ENCODE measurements at regions of chr12 and their contacts with region 1.

Region 1: DNA sequence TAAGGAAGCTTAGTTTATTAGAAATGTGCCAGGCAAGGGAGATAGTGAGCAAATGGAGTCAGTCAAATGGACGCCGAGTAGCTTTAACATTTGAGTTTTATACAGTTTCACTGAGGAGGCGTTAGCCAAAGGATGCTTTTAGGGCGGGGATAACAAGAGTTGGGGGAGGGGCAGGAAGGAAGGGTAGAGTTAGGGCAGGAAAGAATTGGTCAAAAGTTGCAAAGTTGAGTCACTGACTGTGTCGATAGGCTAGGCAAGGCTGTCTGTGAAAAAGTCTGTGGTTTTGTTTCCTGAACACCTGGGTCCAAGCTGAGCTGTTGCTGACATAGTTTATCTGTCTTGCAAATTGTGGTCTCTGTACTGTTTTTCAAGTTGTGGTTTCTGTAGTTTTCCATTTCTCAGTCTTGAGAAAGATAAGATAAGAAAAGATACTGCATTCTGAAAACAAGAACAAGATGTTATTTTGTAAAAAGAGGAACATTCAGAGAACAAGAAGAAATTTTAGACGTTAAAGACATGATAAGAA is 62.6 kb upstream of the RESF1 start:
- DNase-seq: peak; percentile 96
- H3K4me3 Mint-ChIP-seq: peak overlapping the region; percentile 69
- H3K27ac Mint-ChIP-seq: peak overlapping the region; percentile 96
- H3K4me1 Mint-ChIP-seq: peaks cover 37% of the 10 kb centered on the region
- H3K27me3 Mint-ChIP-seq: no peaks in the 10 kb centered on the region

Region 2: DNA sequence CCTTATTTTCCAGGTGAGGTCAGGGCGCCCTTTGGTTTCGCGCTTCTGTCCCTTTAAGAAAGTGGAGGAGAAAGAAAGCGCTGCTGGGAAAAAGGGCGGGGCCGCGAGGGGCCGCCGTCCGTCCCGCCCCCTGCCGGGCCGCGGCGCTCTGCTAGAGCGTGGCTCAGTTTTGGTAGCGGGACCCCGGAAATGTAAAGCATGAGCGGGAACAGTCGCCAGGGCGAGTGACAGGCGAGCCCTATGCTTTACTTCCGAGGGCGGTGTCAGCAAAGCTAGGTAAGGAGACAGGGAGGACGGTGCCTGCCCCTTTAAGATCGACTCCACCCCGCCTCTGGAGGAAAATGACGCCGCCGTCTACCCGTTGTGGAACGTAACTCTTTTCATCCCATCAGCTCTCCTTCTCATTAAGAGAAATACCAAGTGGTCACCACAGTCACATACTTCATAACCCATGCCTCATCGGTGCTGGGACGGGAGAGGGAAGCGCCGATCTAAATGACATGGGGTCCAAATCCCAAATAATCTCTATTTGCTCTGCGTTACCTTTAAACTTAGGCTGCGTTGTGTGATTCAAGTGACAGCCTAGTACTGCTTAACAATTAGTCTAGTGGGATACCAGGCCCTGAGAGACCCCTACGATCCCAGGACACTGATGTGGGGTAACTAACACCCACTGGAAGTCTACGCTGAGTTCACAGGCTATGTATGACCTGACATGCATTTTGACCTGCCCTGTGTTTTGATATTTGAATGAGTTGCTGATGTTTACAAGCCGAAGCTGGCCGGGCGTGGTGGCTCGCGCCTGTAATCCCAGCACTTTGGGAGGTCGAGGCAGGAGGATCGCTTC is 237.3 kb before region 1 on chr12 and contains the start of gene ETFBKMT:
- intact Hi-C with region 1: loop called (anchors 10 kb)
- DNase-seq: peak; percentile 98
- H3K4me3 Mint-ChIP-seq: peak within 1 kb of the TSS; percentile 93
- H3K27ac Mint-ChIP-seq: peak within 1 kb of the TSS; percentile 99
- H3K4me1 Mint-ChIP-seq: peaks cover 15% of the 10 kb centered on the region
- H3K27me3 Mint-ChIP-seq: no peaks in the 10 kb centered on the region
- total RNA-seq, gene ETFBKMT: 0.52 and 0.84 TPM in 2 replicates

Region 3: GRCh38 chr12:31728917-31729640 is 167.5 kb before region 1 on chr12 and contains the start of gene AMN1:
- intact Hi-C with region 1: loop called (anchors 1 kb)
- DNase-seq: peak; percentile 100
- H3K4me3 Mint-ChIP-seq: peak within 1 kb of the TSS; percentile 95
- H3K27ac Mint-ChIP-seq: peak within 1 kb of the TSS; percentile 99
- H3K4me1 Mint-ChIP-seq: peaks cover 44% of the 10 kb centered on the region
- H3K27me3 Mint-ChIP-seq: no peaks in the 10 kb centered on the region
- total RNA-seq, gene AMN1: 2.3 and 2.4 TPM in 2 replicates

Region 4: DNA sequence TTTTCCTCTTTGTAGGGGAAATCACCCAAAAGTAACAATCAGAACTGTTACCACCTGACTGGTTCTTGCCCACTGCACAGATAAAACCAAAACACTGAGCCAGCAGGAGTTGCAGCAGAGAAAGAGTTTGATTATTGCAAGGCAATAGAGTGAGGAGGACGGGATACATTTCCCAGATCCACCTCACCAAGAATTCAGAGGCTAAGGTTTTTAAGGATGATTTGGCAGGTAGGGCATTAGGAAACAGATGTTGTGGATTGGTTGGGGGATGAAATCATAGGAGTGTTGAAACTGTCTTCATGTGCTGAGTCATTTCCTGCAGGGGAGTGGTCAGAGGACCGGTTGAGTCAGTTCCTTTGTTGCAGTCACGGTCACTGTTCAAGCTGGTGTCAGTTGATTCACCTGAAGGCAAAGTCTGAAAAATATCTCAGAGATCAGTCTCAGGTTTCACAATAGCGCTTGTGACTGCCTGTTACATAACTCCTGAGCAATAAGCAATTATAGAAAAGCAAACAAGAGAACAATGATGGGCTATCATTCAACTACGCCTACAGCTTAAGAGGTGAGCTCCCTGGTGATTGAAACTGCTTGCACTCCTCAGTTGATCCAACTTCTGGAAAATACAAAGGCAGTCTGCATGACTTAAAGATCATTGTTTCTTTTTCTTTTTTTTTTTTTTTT is 147.4 kb before region 1 on chr12:
- intact Hi-C with region 1: loop called (anchors 1 kb)
- DNase-seq: peak; percentile 89
- H3K4me3 Mint-ChIP-seq: peak overlapping the region; percentile 1
- H3K27ac Mint-ChIP-seq: peak overlapping the region; percentile 38
- H3K4me1 Mint-ChIP-seq: peaks cover 43% of the 10 kb centered on the region
- H3K27me3 Mint-ChIP-seq: no peaks in the 10 kb centered on the region

Region 5: DNA sequence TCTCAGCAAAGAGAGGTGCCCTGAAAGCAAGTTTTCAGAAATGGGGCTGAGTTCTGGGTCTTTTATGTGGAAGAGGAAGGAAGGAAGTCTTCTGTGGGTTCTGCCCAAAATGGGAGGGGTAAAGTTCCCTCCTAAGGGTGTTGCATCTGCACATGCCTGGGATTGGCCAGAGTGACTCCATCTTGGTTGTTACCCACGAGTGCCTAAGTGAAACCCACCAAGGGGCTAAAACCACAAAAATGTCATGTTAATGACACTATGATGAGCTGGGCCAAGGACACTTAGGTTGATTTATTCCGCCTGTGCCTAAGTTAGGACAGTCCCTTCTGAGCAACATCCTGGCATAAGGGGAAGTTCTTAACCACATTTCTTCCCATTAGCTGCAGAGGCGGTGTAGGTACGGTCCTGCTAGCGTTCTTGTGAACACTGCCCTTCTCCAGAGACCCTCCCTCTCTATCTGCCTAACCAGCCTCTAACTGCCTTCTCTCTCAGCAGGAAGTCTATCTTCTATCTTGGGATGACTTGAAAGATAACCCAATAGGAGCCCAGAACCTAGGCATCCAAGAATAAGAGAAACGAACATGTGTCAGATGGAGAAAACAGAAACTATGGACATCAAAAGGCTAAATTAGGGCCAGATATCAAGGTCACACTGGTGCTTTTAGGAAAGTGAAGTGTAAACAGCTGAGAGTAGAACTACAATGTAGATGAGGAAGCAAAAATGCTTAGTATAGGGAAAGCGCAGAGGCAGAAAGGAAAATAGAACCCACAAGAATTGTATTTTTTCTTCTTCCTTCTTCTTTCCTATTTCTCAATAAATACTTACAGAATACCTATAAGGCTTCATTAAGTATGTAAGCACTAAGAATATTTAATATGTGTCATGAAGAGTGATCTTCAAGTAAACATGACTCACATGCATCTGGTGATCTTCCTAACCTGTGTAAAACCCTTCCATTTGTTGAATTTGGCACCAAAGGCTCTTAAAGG is 63.5 kb before region 1 on chr12:
- intact Hi-C with region 1: loop called (anchors 2 kb)
- DNase-seq: peak; percentile 71
- H3K4me3 Mint-ChIP-seq: peak overlapping the region; percentile 39
- H3K27ac Mint-ChIP-seq: peak overlapping the region; percentile 58
- H3K4me1 Mint-ChIP-seq: peaks cover 20% of the 10 kb centered on the region
- H3K27me3 Mint-ChIP-seq: no peaks in the 10 kb centered on the region

Region 6: GRCh38 chr12:31928246-31929026 is 31.9 kb after region 1 on chr12:
- intact Hi-C with region 1: loop called (anchors 2 kb)
- DNase-seq: peak; percentile 78
- H3K4me3 Mint-ChIP-seq: peak overlapping the region; percentile 83
- H3K27ac Mint-ChIP-seq: peak overlapping the region; percentile 90
- H3K4me1 Mint-ChIP-seq: peaks cover 25% of the 10 kb centered on the region
- H3K27me3 Mint-ChIP-seq: no peaks in the 10 kb centered on the region

Measured in activated CD4-positive, alpha-beta T cell treated with anti-CD3 and anti-CD28 coated beads, Interleukin-2, amount 10 ng/mL, durations not matched to agents 24 days and 14 days (primary cell).